ENCODE measurements at regions of chr20 and their contacts with region 1.

Region 1: DNA sequence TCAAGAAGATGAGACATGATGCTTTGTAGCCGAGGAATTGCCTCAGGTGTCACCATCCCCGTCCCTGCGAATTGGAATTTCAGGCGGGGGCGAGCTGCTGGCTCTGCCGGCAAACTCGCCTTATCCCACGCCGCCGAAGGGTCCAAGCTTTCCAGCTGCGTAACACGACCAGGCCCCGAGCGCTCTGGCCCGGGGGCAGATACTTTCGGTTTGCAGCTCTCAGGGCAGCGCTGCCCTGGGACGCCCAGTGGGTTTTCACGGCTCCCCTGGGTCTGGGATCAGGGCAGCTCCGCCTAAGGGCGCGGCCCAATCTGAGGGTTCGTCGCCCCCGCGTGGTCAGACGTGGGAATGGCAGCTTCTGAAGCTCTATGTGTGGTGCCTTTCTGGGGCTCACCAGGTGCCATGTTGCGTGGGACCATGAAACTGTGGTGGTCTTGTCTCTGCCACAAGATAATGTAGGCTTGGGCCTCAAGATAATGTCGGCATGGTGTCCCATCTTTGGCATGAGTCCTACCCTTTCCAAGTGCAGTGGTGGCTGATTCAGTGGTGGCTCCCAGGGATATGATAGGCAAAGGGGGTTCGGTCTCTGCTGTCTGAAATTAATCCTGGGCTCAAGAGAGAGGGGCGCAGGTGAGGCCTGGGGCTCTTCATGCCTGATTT is 20.9 kb downstream of the PIGT start:
- DNase-seq: no peak
- H3K4me3 ChIP-seq: peak overlapping the region; percentile 60
- CTCF ChIP-seq: peak; percentile 95

Region 2: GRCh38 chr20:45300961-45301360 is 135.9 kb before region 1 on chr20:
- CTCF ChIA-PET with region 1: interaction called, 13 read pairs
- POLR2A ChIA-PET with region 1: no interaction called
- DNase-seq: no peak
- H3K4me3 ChIP-seq: no peak overlapping the region
- CTCF ChIP-seq: peak; percentile 58

Region 3: DNA sequence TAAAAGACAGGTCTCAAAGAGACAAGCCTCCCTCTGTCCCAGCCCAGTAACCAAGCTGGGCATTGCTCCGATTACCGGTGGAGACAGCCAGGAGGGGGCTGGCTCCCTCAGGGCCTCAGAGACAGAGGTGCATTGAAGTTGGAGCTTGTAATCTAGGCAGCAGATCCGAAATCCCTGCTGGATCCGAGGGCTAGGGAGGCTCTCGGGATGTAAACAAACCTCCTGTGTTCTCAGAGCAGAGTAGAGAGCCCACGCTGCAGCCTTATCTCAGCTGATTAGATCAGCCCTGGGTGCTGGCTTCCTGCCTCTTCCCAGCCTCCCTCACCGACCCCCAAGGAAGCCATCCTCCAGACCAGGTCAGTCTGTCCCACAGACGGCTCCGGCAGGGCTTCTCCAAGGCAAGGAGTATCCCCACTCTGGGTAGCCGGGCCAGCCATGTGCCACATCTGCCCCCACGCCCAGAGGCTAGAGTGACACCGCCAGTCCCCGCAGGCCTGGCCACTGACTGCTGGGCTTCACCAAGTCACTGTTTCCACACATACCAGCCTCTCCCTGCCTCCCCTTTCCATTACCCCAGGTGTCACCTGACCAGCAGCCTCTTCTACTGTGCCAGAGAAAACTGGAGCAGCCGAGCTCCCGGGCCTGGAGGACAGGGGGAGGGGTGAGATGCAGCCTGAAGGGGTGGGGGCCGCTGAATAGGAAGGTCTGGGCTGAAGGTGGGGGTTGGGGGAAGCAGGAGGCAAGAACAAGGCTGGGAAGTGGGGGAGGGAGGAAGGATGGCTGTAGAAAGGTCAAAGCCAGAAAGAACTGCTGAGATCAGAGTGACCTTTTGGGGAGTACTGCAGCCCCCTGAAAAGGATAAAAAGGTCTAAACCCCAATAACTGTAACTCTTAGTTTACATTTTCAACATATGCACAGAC is 94.7 kb before region 1 on chr20:
- CTCF ChIA-PET with region 1: interaction called, 30 read pairs
- POLR2A ChIA-PET with region 1: interaction called, 4 read pairs
- DNase-seq: no peak
- H3K4me3 ChIP-seq: peak overlapping the region; percentile 35
- CTCF ChIP-seq: no peak

Region 4: GRCh38 chr20:45362804-45363610 is 73.9 kb before region 1 on chr20 and contains the start of gene SYS1:
- CTCF ChIA-PET with region 1: interaction called, 178 read pairs
- POLR2A ChIA-PET with region 1: interaction called, 10 read pairs
- DNase-seq: peak; percentile 90
- H3K4me3 ChIP-seq: peak within 1 kb of the TSS; percentile 96
- CTCF ChIP-seq: peak; percentile 87

Region 5: DNA sequence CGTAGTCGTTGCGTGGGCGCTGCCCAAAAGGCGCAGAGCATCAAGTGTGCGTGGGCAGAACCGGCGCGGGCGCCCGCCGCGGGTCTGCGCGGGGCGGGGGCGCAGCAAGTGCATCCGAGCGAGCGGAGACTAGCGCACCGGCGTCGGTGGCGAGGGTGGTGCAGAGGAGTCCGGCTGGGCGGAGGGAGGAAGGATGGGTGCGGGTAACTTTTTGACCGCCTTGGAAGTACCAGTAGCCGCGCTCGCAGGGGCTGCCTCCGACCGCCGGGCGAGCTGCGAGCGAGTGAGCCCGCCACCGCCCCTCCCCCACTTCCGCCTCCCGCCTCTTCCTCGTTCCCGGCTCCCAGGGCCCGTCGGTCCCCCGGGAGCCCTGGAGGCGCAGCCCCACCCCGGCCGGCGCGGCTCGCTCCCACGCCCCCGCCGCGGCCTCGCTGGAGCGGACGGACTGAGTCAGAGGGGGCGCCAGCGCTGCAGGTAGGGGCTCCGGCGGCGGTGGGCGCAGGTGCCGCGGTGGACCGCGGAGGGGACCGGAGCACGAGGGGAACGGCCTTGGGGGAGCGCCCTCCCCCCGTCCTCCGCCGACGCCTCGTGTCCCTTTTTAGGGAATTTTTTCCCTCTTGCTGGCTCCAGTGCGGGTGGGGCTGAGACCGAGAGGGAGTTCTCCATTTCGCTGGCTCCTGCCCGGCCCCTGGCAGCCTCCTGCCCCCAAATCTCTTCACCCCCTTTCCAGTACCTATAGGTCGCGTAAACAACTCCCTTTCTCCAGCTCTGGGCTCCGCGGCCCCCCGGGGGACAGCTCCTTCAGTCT is 30.4 kb before region 1 on chr20:
- CTCF ChIA-PET with region 1: interaction called, 12 read pairs
- POLR2A ChIA-PET with region 1: interaction called, 3 read pairs
- DNase-seq: no peak
- H3K4me3 ChIP-seq: peak overlapping the region; percentile 66
- CTCF ChIP-seq: no peak

Region 6: DNA sequence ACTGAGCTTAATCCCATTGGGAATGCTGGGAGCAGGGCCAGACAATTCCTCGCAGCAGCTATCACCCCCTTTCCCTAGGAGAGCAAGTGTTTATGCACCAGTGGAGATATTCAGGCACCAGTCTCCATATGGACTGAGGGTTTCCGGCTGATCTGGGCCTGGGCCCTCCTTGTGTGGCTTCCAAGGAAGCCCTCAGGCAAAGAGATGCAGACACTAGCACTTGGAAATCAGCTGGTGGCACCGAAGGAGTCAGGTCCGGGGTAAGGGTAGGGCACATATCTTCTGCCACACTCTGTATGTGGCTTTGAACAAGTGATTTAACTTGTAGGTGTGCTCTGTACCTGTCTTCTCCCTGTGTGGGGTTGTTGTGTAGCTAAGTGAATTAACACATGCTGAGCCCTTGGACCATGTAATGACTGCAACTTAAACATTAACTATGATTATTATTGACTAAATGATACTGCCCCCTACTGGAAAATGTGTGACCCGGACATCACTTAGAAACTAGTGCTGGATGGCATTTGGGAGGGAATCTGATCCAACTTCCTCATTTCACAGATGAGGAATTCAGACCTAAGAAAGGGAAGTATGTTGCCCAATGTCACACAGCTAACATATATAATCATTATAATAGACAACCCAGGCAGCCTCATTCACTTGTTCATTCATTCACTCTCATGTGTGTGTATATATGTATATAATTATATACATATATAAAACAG is 13.4 kb after region 1 on chr20:
- CTCF ChIA-PET with region 1: interaction called, 101 read pairs
- POLR2A ChIA-PET with region 1: no interaction called
- DNase-seq: no peak
- H3K4me3 ChIP-seq: no peak overlapping the region
- CTCF ChIP-seq: peak; percentile 49